BJ (cell line): ENCODE measurements at regions of chr7 and their contacts with region 1.

Region 1: DNA sequence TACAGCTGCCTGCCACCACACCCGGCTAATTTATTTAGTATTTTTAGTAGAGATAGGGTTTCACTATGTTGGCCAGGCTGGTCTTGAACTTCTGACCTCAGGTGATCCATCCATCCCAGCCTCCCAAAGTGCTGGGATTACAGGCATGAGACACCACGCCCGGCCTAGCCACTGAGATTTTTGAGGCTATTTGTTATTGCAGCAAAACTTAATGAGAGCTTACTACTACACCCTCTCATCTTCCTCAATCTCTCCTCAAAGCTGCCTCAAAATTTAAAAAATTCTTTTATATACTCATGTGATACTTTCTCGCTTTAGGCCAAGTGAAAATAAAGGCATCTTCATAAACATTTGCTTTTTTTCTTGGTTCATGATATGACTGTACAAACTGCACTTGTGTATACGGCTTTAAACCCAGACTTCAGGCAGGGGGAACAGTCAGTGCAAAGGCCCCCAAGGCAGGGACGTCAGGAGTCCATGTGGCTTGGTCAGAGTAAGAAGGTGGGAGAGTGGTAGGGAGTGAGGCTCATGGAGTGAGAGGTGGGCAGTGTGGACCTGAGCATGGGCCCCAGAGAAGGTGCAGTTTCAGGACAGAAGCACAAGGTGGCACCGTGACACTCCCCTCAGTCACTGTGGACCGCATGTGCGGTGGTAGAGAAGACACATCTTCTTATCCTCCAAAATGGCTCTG is 55.5 kb downstream of the SYPL1 start:
- DNase-seq: no peak
- H3K4me3 ChIP-seq: no peak overlapping the region
- H3K27me3 ChIP-seq: peaks cover 5% of the 10 kb centered on the region
- CTCF ChIP-seq: peak; percentile 88

Region 2: GRCh38 chr7:106166655-106167342 is 110.1 kb after region 1 on chr7:
- CTCF ChIA-PET with region 1: interaction called, 18 read pairs
- POLR2A ChIA-PET with region 1: no interaction called
- DNase-seq: no peak
- H3K4me3 ChIP-seq: no peak overlapping the region
- H3K27me3 ChIP-seq: no peaks in the 10 kb centered on the region; the same call in none of the 2 replicates
- CTCF ChIP-seq: peak; percentile 73

Region 3: DNA sequence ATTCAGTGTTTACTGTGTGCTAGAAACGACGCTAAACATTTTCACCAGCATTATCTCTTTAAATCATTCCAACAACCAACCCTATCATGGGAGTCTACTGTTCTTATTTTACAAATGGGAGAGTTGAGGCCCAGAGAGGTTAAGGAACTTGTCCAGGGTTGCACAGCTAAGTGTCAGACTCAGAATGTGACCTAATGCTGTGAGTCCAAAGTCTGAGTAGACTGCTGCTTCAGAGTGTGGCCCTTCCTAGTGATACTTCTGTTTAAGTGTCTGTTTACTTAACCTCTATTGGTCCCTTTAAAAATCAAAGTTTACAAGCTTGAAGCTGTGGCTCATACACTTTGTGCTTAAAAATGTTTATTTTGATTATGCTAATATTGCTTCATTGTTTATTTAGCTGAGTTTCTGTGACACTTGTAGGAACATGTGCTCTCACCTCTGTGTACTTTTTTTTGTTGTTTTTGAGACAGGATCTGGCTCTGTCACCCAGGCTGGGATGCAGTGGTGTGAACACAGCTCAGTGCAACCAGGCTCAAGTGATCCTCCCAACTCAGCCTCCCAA is 139.9 kb after region 1 on chr7:
- CTCF ChIA-PET with region 1: no interaction called
- POLR2A ChIA-PET with region 1: no interaction called
- DNase-seq: no peak
- H3K4me3 ChIP-seq: no peak overlapping the region
- H3K27me3 ChIP-seq: peaks cover 2% of the 10 kb centered on the region; the same call in 1 of the 2 replicates
- CTCF ChIP-seq: no peak